ENCODE measurements at regions of chr17 and their contacts with region 1.

Region 1: DNA sequence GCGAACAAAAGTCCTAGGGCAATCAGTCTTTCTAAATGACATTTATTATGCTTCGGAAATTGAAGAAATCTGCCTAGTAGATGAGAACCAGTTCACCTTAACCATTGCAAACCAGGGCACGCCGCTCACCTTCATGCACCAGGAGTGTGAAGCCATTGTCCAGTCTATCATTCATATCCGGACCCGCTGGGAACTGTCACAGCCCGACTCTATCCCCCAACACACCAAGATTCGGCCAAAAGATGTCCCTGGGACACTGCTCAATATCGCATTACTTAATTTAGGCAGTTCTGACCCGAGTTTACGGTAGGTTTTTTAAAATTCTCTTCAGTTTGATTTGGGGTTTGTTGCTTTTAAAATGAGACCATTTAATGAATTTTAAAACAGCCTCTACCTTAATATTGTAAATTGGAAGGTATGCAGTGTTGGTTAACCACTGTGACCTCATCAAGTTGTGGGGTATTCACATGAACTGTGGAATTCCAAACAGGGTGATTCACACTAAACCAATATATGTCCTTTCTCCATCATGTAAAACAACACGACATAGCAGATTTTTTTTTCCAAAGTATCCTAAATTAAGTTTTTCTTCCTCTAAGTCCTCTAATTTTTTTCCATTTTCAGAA is 6.2 kb upstream of the EVI2A start:
- DNase-seq: no peak
- ATAC-seq: no peak
- H3K4me3 ChIP-seq: no peak overlapping the region
- H3K4me3 Mint-ChIP-seq: no peak overlapping the region
- H3K27ac ChIP-seq: no peak overlapping the region
- H3K27ac Mint-ChIP-seq: no peak overlapping the region
- H3K4me1 ChIP-seq: no peaks in the 10 kb centered on the region
- H3K4me1 Mint-ChIP-seq: peaks cover 10% of the 10 kb centered on the region
- H3K27me3 ChIP-seq: no peaks in the 10 kb centered on the region
- H3K27me3 Mint-ChIP-seq: no peaks in the 10 kb centered on the region
- CTCF ChIP-seq: no peak

Region 2: GRCh38 chr17:31364012-31364411 is 36.4 kb after region 1 on chr17:
- CTCF ChIA-PET with region 1: no interaction called
- POLR2A ChIA-PET with region 1: no interaction called
- intact Hi-C with region 1: loop called in 1 of 2 experiments (anchors 5 kb)
- DNase-seq: no peak
- ATAC-seq: no peak
- H3K4me3 ChIP-seq: no peak overlapping the region
- H3K4me3 Mint-ChIP-seq: no peak overlapping the region
- H3K27ac ChIP-seq: no peak overlapping the region
- H3K27ac Mint-ChIP-seq: no peak overlapping the region
- H3K4me1 ChIP-seq: no peaks in the 10 kb centered on the region
- H3K4me1 Mint-ChIP-seq: no peaks in the 10 kb centered on the region
- H3K27me3 ChIP-seq: no peaks in the 10 kb centered on the region
- H3K27me3 Mint-ChIP-seq: no peaks in the 10 kb centered on the region
- CTCF ChIP-seq: no peak